AG04449 (cell line): ENCODE measurements at regions of chr10 and their contacts with region 1.

Region 1: DNA sequence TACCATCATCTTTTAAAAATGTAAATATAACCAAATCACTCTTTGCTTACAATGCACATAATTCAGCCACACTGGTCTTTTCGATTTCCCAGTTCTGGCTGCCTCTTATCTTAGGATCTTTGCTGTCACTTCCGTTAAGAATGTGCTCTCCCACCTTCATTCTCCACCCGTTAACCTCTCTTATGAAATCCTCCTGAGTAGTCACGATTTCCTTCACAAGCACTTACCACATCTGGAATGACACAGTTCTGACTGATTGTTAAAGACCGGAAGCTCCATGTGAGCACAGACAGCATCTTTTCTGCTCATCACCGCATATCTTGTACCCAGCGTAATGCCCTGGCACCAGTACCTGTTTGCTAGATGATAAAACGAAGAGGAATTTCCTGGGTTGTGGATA is 84.3 kb downstream of the CUL2 start:
- DNase-seq: peak; percentile 93
- H3K4me3 ChIP-seq: no peak overlapping the region
- CTCF ChIP-seq: no peak

Region 2: GRCh38 chr10:34504534-34504933 is 501.3 kb before region 1 on chr10:
- CTCF ChIA-PET with region 1: no interaction called
- POLR2A ChIA-PET with region 1: no interaction called
- DNase-seq: no peak
- H3K4me3 ChIP-seq: no peak overlapping the region
- CTCF ChIP-seq: no peak

Region 3: GRCh38 chr10:34994565-34995142 is 11.2 kb before region 1 on chr10:
- CTCF ChIA-PET with region 1: interaction called, 25 read pairs
- POLR2A ChIA-PET with region 1: interaction called, 5 read pairs
- DNase-seq: no peak
- H3K4me3 ChIP-seq: no peak overlapping the region
- CTCF ChIP-seq: peak; percentile 34

Region 4: DNA sequence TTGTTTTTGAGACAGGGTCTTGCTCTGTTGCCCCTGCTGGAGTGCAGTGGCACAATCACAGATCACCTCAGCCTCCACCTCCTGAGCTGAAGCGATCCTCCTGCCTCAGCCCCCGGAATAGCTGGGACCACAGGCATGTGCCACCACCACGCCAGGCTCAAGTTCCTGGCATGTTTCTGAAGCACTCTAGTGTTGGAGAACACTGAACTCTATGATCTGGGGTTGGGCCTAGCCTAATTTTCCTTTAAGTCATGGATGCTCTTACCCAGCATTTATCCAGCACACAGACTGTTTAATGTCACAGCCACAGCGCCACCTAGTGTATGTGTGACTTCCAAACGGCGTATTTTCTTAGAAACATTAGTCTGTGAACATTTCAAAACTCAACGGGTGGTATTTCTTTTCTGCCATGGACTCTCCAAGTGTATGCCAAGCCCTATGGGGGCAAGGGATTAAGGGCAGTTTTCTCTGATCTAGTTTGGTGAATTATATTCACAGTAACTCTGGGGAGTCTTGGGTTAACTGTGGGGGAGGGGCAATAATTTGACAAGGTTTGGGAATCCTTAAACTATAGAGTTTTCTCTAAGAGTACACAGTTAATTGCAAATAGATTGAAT is 212.6 kb after region 1 on chr10:
- CTCF ChIA-PET with region 1: no interaction called
- POLR2A ChIA-PET with region 1: no interaction called
- DNase-seq: no peak
- H3K4me3 ChIP-seq: no peak overlapping the region
- CTCF ChIP-seq: peak; percentile 71